ENCODE measurements at regions of chr19 and their contacts with region 1.

Region 1: GRCh38 chr19:52748336-52748950 is 13.6 kb upstream of the ZNF611 start:
- DNase-seq: peak in 1 of 2 donors; percentile 37
- H3K4me3 ChIP-seq: no peak overlapping the region
- H3K27ac ChIP-seq: no peak overlapping the region
- H3K4me1 ChIP-seq: no peaks in the 10 kb centered on the region
- H3K27me3 ChIP-seq: no peaks in the 10 kb centered on the region
- CTCF ChIP-seq: peak in 5 of 6 experiments; percentile 21 to 64 (median 40)
- POLR2A ChIP-seq: no peak

Region 2: DNA sequence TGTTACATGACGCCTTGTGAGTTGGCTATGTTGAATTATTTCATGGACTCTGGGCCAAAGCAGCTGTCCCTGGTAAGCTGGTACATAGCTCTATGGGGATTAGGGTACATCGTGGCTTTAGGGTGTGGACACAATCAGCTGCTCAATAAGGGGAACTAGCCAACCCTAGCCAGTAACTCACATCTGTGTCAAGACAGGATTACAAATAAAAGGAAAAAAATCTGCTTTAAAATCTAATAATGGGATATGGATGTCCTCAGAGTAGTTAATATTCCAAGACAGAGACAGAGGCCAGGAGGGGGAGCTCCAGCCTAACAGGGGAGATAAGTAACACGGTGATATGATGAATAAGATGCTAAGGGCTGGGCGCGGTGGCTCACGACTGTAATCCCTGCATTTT is 500.2 kb before region 1 on chr19:
- intact Hi-C with region 1: loop called (anchors 10 kb)
- DNase-seq: peak; percentile 66 to 71
- H3K4me3 ChIP-seq: no peak overlapping the region
- H3K27ac ChIP-seq: no peak overlapping the region
- H3K4me1 ChIP-seq: no peaks in the 10 kb centered on the region
- H3K27me3 ChIP-seq: no peaks in the 10 kb centered on the region
- CTCF ChIP-seq: peak; percentile 30 to 75 (median 62)
- POLR2A ChIP-seq: no peak

Region 3: DNA sequence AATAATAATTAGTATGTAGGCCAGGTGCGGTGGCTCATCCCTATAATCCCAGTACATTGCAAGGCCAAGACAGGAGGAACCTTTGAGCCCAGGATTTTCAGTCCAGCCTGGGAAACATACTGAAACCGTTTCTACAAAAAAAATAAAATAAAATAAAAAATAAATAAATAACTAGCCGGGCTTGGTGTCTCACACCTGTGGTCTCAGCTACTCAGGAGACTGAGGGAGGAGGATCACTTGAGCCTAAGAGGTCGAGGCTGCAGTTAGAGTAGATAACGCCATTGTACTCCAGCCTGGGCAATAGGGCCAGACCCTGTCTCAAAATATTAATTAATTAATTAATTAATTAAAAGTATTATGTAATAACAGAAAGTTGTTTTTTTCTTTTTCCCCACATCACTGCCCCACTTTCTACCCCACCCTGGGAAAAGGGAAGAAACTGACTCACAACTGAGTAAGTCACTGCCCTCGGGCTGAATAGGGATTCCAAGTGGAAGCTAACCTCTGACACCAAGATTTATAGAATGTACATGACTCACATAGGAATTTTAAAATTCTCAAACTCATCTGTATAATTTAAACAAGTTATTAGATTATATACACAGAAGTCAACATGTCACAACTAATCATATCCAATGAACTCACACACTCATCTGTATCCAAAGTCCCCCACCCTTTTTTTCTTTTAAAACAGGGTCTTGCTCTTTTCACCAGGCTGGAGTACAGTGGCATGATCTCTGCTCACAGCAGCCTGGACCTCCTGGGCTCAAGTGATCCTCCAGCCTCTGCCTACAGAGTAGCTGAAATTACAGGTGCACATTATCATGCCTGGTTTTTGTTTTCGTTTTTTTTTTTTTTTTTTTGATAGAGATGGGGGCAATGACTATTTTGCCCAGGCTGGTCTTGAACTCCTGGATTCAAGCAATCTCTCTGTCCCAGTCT is 26.1 kb before region 1 on chr19:
- intact Hi-C with region 1: no loop called
- DNase-seq: no peak
- H3K4me3 ChIP-seq: no peak overlapping the region
- H3K27ac ChIP-seq: no peak overlapping the region
- H3K4me1 ChIP-seq: no peaks in the 10 kb centered on the region
- H3K27me3 ChIP-seq: no peaks in the 10 kb centered on the region
- CTCF ChIP-seq: no peak
- POLR2A ChIP-seq: no peak